ENCODE measurements at regions of chr3 and their contacts with region 1.

Region 1: DNA sequence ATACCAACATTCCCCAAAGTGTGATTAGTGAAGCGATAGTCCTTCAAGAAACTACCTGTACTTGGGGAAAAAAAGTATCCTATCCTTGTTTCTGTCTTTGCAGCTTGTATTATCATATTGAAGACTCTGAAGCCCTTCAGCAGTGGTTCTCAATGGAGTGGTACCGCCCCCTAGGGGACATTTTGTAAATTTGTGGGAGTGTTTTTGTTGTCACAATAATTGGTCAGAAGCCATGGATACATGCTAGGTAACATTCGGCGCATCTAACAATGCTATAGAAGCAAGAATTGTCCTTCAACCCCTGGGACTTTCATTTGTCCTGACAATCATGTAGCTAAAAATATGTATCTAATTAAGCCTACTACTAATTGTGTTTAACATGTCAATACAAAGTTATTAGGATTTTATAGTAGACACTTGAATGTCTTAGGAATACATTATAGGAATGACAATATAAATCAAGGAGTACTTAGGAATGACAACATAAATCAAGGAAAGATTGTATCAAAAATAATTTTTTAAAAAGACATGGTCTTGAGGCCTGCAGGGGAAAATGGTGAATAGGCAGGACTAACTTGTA is 53.7 kb downstream of the NMD3 start:
- DNase-seq: peak; percentile 59 to 81 (median 74)
- H3K4me3 ChIP-seq: no peak overlapping the region
- H3K27ac ChIP-seq: peak overlapping the region in 1 of 2 experiments; percentile 2
- H3K4me1 ChIP-seq: no peaks in the 10 kb centered on the region
- H3K27me3 ChIP-seq: no peaks in the 10 kb centered on the region

Region 2: GRCh38 chr3:160956806-160957205 is 318.0 kb before region 1 on chr3:
- CTCF ChIA-PET with region 1: interaction called, 12 read pairs
- POLR2A ChIA-PET with region 1: no interaction called
- DNase-seq: peak; percentile 46 to 62 (median 57)
- H3K4me3 ChIP-seq: no peak overlapping the region
- H3K27ac ChIP-seq: no peak overlapping the region
- H3K4me1 ChIP-seq: no peaks in the 10 kb centered on the region
- H3K27me3 ChIP-seq: no peaks in the 10 kb centered on the region

Region 3: GRCh38 chr3:161203485-161204098 is 71.2 kb before region 1 on chr3:
- CTCF ChIA-PET with region 1: no interaction called
- POLR2A ChIA-PET with region 1: no interaction called
- DNase-seq: no peak
- H3K4me3 ChIP-seq: no peak overlapping the region
- H3K27ac ChIP-seq: no peak overlapping the region
- H3K4me1 ChIP-seq: no peaks in the 10 kb centered on the region
- H3K27me3 ChIP-seq: no peaks in the 10 kb centered on the region

Region 4: GRCh38 chr3:161291195-161291912 is 16.5 kb after region 1 on chr3:
- CTCF ChIA-PET with region 1: interaction called, 20 read pairs
- POLR2A ChIA-PET with region 1: no interaction called
- DNase-seq: no peak
- H3K4me3 ChIP-seq: no peak overlapping the region
- H3K27ac ChIP-seq: no peak overlapping the region
- H3K4me1 ChIP-seq: no peaks in the 10 kb centered on the region
- H3K27me3 ChIP-seq: no peaks in the 10 kb centered on the region

Region 5: DNA sequence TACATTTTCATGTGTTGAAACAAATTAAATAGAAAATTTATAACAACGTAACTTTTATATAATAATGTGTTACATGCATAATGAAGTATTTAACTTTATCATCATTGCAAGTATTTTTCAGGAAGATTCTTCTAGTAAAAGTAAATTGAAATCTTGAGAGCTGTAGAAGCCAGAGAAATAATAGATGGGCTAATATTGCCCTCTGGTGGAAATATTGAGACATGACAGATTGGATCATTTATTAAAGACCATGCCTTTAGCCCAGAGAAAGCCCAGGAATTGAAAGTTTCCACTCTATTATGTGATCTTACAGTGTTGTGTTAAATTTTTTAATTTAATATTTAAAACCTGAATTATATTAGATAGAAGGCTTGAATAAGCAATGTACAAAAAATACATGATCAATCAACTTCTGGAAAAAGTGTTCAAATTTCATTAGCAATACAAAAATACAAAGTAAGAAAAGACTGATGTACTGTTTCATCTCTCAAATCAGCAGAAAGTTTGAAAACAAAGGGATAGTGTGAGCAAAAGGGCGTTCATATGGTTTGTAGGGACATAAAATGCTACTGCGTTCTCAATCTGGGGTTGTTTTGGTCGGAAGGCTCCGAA is 149.2 kb after region 1 on chr3:
- CTCF ChIA-PET with region 1: interaction called, 10 read pairs
- POLR2A ChIA-PET with region 1: no interaction called
- DNase-seq: peak; percentile 27 to 68 (median 50)
- H3K4me3 ChIP-seq: no peak overlapping the region
- H3K27ac ChIP-seq: no peak overlapping the region
- H3K4me1 ChIP-seq: no peaks in the 10 kb centered on the region
- H3K27me3 ChIP-seq: no peaks in the 10 kb centered on the region